Psoas muscle (tissue), 8 donors: ENCODE measurements at regions of chr6 and their contacts with region 1.

Region 1: GRCh38 chr6:33014841-33015634 is 5.6 kb upstream of the HLA-DOA start:
- DNase-seq: no peak
- ATAC-seq: peak; percentile 69 to 86 (median 72)
- H3K4me3 ChIP-seq: no peak overlapping the region
- H3K27ac ChIP-seq: no peak overlapping the region
- H3K4me1 ChIP-seq: peaks cover 15% of the 10 kb centered on the region
- H3K27me3 ChIP-seq: peaks cover 0 to 10% (median 2%) of the 10 kb centered on the region in 3 donors
- CTCF ChIP-seq: peak; percentile 84

Region 2: DNA sequence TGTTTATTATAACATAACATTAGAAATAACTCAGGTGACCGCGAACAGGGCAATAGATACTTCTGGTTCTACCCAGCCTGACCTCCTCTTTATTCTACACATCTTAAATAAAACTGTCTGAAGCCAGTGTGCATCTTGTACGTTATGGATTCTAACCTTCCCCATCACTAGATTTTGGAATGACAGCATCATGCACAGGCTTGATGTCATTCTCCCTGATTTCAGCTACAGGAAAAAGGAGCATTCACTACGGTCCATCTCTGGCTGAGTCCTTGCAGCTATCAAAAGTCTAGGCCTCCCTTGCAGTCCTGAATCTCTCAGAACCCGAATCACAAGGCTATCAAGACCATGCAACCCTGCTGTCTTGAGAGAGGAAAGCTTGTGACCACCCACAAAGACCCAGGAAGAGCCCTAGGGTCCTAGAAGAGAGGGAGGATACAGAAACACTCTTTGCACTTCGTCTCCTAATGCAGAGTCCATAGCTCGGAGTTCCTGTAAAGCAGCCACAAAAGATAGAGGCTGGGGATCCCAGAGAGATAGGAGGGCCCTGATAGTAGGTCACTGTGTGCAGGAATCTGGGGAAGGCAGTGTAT is 57.6 kb after region 1 on chr6:
- intact Hi-C with region 1: no loop called
- DNase-seq: no peak
- ATAC-seq: no peak
- H3K4me3 ChIP-seq: peak overlapping the region; percentile 48
- H3K27ac ChIP-seq: no peak overlapping the region
- H3K4me1 ChIP-seq: no peaks in the 10 kb centered on the region
- H3K27me3 ChIP-seq: peaks cover 0 to 3% (median 2%) of the 10 kb centered on the region in 3 donors
- CTCF ChIP-seq: no peak

Region 3: GRCh38 chr6:33082702-33083101 is 67.7 kb after region 1 on chr6:
- intact Hi-C with region 1: loop called in 1 of 2 experiments (anchors 2 kb)
- DNase-seq: peak; percentile 29 to 67
- ATAC-seq: peak in 1 of 4 donors; percentile 81
- H3K4me3 ChIP-seq: no peak overlapping the region
- H3K27ac ChIP-seq: no peak overlapping the region
- H3K4me1 ChIP-seq: no peaks in the 10 kb centered on the region
- H3K27me3 ChIP-seq: peaks cover 0 to 7% (median 0%) of the 10 kb centered on the region in 3 donors
- CTCF ChIP-seq: peak; percentile 53

Region 4: DNA sequence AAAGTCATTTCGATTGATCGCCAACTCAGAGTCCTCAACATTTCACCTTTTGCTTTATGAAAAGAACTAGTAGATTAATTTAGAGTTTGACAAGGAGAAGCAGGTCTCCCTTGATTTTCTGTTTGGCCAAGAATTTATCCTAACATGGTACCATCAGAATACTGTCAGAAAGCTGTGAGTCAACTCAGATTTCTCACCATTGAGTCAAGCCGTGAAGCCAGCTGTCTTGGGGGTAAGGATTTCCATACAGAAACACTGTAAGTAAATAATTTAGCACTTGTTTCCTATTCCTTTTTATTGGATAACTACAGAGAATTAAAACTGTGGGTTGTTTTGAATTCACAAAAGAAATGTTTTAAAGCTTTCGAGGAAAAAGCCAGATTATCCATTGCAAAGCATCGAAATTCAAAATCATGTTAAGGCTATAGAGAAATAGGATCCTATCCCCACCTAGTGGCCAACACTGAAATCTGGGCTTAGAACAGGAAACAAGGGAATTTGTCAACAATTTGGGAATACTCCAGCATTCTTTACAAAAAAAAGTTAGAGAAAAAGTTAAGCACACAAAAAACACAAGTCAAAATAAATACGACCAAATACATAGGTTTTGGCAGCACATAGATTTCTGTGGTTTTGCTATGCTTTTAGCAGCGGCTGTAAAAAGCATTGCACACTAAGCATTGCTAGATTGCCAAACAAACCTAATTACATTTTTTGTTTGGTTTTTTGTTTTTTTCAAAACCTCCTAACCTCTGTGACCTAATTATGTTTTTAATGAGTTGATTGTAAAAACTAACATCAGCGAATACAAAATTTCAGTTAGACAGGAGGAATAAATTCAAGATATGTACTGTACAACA is 133.0 kb after region 1 on chr6:
- intact Hi-C with region 1: loop called in 1 of 2 experiments (anchors 2 kb)
- DNase-seq: no peak
- ATAC-seq: peak in 1 of 4 donors; percentile 56
- H3K4me3 ChIP-seq: no peak overlapping the region
- H3K27ac ChIP-seq: no peak overlapping the region
- H3K4me1 ChIP-seq: no peaks in the 10 kb centered on the region
- H3K27me3 ChIP-seq: peaks cover 0 to 32% (median 7%) of the 10 kb centered on the region in 3 donors
- CTCF ChIP-seq: peak; percentile 75

Region 5: DNA sequence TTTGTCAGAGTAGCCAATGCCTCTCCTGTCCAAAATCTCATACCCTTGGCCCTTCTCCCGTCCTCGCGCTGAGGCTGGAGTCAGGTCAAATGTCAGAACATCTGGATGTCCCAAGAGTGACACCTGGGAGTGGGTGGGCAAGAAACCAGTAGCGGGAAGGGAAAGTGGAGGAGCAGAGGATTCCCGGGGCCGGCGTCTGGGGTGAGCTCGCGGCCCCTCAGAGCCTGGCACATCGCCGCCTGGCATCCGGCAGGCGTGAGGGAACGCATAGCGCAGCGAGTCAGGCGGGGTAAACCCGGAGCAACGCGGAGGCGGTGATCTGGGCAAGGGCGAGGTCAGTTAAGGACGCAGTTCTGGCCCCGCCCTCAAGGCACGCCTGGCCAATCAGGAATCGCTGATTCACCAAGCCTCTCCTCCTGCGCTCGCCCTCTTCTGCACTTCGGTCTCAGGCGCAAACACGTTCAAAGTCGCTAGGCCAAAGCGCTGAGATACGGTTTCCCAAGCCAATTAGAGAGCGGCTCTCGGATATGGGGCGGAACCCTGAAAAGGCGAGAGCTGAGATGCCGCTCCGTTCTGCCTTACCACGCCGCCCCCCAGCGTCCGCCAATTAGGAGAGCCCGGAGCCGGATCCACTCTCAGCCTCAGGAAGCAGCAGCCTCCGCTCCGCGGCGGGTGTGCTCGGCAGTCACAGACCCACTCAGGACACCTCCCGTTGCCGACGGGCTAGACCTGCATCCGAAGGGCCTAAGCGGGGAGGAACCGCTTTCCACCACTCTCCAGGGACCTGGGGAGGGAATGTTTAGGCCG is 234.1 kb after region 1 on chr6:
- intact Hi-C with region 1: loop called (anchors 2 kb)
- DNase-seq: peak; percentile 96 to 98
- ATAC-seq: peak; percentile 95 to 97 (median 96)
- H3K4me3 ChIP-seq: peak overlapping the region; percentile 74
- H3K27ac ChIP-seq: peak overlapping the region; percentile 85
- H3K4me1 ChIP-seq: peaks cover 13% of the 10 kb centered on the region
- H3K27me3 ChIP-seq: no peaks in the 10 kb centered on the region
- CTCF ChIP-seq: no peak